Stomach (tissue), 19 donors: ENCODE measurements at regions of chr20 and their contacts with region 1.

Region 1: DNA sequence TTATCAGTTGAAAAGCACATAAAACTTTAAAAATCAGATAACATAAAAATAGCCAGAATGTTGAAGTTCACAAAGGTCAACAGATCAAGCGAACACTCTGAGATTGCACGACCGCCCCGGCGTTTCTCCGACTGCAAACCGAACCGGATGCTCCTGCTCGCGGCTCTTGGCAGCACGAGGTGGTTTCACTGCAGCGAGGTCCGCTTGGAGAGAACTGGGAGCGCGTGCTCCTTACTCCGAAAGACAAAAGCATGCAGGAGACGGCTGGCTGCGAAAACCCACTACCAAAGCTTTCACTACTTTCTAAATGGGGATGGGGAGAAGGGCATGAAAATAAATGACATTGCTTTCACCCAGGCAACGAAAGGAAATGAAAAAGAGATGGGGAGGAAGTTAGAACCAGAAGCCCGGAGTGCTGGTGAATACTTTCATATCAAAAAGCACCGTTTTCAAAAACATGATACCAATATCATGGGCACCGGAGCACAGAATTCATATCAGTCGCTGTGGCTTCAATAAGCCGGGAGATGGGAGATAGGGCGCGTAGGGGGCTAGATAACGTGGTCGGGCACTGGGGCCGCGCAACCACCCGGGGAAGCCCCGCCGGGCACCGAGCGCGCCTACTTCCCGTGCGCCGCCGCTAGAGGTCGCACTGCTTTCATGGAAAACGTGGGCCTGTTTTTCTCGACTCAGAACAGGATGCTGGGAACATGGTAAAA is 8.3 kb upstream of the ANKRD60 start:
- DNase-seq: peak; percentile 75 to 89
- H3K4me3 ChIP-seq: peak overlapping the region; percentile 38 to 54 (median 50)
- H3K27ac ChIP-seq: peak overlapping the region in 1 of 5 donors; percentile 13
- H3K4me1 ChIP-seq: peaks cover 0 to 15% (median 7%) of the 10 kb centered on the region in 4 donors
- H3K27me3 ChIP-seq: no peaks in the 10 kb centered on the region
- CTCF ChIP-seq: peak in 5 of 7 experiments; percentile 70 to 97 (median 92)
- EP300 ChIP-seq: no peak
- POLR2A ChIP-seq: no peak

Region 2: GRCh38 chr20:58447511-58448391 is 211.0 kb after region 1 on chr20:
- intact Hi-C with region 1: loop called (anchors 10 kb)
- DNase-seq: peak; percentile 52 to 73
- H3K4me3 ChIP-seq: no peak overlapping the region
- H3K27ac ChIP-seq: no peak overlapping the region
- H3K4me1 ChIP-seq: no peaks in the 10 kb centered on the region
- H3K27me3 ChIP-seq: no peaks in the 10 kb centered on the region
- CTCF ChIP-seq: peak in 5 of 7 experiments; percentile 25 to 54 (median 45)
- EP300 ChIP-seq: no peak
- POLR2A ChIP-seq: no peak